Aorta (tissue), 5 donors: ENCODE measurements at regions of chr9 and their contacts with region 1.

Region 1: DNA sequence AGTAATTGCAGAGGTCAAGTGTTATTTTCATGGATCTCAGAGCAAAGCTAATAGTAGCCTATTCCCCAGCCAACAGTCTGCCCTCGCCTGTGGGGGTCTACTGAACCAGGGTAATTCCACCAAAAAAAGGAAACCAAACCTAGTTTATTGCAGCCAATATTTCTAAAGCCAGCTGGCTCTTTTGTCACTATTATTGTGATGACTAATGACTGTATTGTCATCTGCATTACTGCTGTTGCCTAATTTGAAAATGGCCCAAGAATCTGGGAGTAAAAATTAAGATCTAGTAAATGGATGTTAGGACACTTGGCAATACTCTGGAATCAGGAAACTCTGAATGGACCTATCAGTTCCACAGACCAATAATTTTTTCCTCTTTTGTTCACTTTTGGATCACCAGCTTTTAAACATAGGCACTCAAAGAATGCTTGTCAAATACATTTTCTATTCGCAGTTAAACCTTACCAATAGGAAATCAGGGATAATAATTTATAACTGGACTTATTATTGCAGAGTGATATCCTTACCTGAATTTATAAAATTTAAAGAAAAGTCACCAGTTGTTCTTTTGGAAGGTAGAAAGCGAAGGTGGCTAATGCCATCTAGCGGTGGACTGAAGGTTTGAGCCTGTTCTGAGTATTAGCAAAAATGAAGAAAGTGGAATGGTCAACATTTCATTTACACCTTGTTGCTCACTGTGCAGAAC is 69.2 kb downstream of the SYK start:
- DNase-seq: no peak
- ATAC-seq: no peak
- H3K4me3 ChIP-seq: no peak overlapping the region
- H3K27ac ChIP-seq: no peak overlapping the region
- H3K4me1 ChIP-seq: no peaks in the 10 kb centered on the region
- H3K27me3 ChIP-seq: no peaks in the 10 kb centered on the region

Region 2: DNA sequence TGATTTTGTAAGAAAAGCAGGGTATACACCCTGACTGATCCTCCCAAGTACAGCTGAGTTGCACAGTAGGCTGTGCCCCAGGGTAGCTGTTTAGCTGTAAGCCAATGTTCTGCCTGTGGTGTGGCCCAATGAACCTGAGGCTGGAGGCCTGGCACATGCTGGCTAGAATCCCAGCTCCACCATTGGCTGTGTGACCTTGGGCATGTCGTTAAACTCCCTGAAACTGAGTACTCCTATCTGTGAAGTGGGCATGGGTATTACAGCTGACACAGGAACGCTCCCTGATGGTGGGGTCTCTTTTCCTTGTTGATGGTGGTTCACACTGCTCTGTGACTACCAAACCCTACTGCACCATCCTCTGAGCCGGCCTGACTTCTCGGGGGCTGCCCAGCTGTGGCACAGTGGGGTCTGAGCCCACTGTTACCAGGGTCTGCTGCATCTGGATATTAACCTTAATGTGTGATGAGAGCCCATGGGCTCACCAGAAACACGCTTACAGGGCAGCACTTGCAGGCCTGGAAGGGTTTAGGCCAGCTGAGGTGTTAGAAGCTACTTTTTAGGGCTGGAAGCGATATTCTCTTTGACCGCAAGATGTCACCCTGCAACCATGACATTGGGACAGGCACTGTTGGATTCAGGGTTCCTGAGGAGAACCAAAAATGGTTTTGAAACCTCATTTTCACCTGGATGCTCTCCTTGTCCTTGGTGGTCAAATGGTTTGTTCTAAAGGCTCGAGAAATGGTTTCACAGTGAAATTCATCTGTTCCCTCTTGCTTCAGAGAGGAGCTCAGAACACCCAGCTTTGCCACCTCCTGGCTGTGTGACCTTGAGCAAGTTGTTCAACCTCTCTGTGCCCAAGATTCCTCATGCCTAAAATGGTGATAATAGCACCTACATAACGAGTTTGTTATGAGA is 1272.8 kb before region 1 on chr9:
- intact Hi-C with region 1: loop called (anchors 5 kb)
- DNase-seq: no peak
- ATAC-seq: peak; percentile 68
- H3K4me3 ChIP-seq: no peak overlapping the region
- H3K27ac ChIP-seq: no peak overlapping the region
- H3K4me1 ChIP-seq: no peaks in the 10 kb centered on the region
- H3K27me3 ChIP-seq: no peaks in the 10 kb centered on the region

Region 3: GRCh38 chr9:90142580-90142979 is 728.2 kb before region 1 on chr9:
- intact Hi-C with region 1: loop called in 1 of 2 experiments (anchors 5 kb)
- DNase-seq: peak in 1 of 2 donors; percentile 49
- ATAC-seq: no peak
- H3K4me3 ChIP-seq: no peak overlapping the region
- H3K27ac ChIP-seq: no peak overlapping the region
- H3K4me1 ChIP-seq: no peaks in the 10 kb centered on the region
- H3K27me3 ChIP-seq: no peaks in the 10 kb centered on the region

Region 4: GRCh38 chr9:90842996-90843395 is 27.8 kb before region 1 on chr9:
- intact Hi-C with region 1: no loop called
- DNase-seq: no peak
- ATAC-seq: no peak
- H3K4me3 ChIP-seq: no peak overlapping the region
- H3K27ac ChIP-seq: no peak overlapping the region
- H3K4me1 ChIP-seq: no peaks in the 10 kb centered on the region
- H3K27me3 ChIP-seq: peaks cover 0 to 2% of the 10 kb centered on the region in 2 donors